Heart right ventricle (tissue), 16 donors: ENCODE measurements at regions of chr2 and their contacts with region 1.

Region 1: GRCh38 chr2:219402665-219403515 is 15.2 kb upstream of the DNPEP start:
- DNase-seq: peak in 1 of 2 donors; percentile 75
- ATAC-seq: peak in 6 of 8 donors; percentile 7 to 31 (median 19)
- H3K4me3 ChIP-seq: no peak overlapping the region
- H3K27ac ChIP-seq: peak overlapping the region in 8 of 10 donors; percentile 83 to 96 (median 92)
- H3K4me1 ChIP-seq: peaks cover 0 to 50% (median 19%) of the 10 kb centered on the region in 9 donors
- H3K27me3 ChIP-seq: no peaks in the 10 kb centered on the region
- CTCF ChIP-seq: peak; percentile 83 to 94 (median 90)

Region 2: GRCh38 chr2:219278655-219279516 is 124.0 kb before region 1 on chr2 and contains the start of gene DNAJB2:
- intact Hi-C with region 1: no loop called
- DNase-seq: peak; percentile 99
- ATAC-seq: peak; percentile 95 to 97 (median 97)
- H3K4me3 ChIP-seq: peak within 1 kb of the TSS; percentile 56 to 96 (median 75)
- H3K27ac ChIP-seq: peak within 1 kb of the TSS; percentile 91 to 100 (median 98)
- H3K4me1 ChIP-seq: peaks cover 11 to 62% (median 36%) of the 10 kb centered on the region in 9 donors
- H3K27me3 ChIP-seq: no peaks in the 10 kb centered on the region
- CTCF ChIP-seq: no peak
- total RNA-seq, gene DNAJB2: 55.6 to 87.6 (median 83.1) TPM

Region 3: DNA sequence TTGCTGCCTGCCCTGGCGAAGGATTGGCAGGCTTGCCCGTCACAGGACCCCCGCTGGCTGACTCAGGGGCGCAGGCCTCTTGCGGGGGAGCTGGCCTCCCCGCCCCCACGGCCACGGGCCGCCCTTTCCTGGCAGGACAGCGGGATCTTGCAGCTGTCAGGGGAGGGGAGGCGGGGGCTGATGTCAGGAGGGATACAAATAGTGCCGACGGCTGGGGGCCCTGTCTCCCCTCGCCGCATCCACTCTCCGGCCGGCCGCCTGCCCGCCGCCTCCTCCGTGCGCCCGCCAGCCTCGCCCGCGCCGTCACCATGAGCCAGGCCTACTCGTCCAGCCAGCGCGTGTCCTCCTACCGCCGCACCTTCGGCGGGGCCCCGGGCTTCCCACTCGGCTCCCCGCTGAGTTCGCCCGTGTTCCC is 15.3 kb after region 1 on chr2 and contains the start of gene DES:
- intact Hi-C with region 1: loop called in 2 of 10 experiments (anchors 1 to 2 kb)
- DNase-seq: peak; percentile 77 to 80
- ATAC-seq: peak; percentile 53 to 76 (median 66)
- H3K4me3 ChIP-seq: peak within 1 kb of the TSS; percentile 43 to 74 (median 59)
- H3K27ac ChIP-seq: peak within 1 kb of the TSS; percentile 82 to 98 (median 95)
- H3K4me1 ChIP-seq: peaks cover 2 to 28% (median 15%) of the 10 kb centered on the region in 9 donors
- H3K27me3 ChIP-seq: peaks cover 0 to 45% (median 24%) of the 10 kb centered on the region in 7 donors
- CTCF ChIP-seq: no peak
- total RNA-seq, gene DES: 12,560 to 18,019 (median 15,816) TPM

Region 4: DNA sequence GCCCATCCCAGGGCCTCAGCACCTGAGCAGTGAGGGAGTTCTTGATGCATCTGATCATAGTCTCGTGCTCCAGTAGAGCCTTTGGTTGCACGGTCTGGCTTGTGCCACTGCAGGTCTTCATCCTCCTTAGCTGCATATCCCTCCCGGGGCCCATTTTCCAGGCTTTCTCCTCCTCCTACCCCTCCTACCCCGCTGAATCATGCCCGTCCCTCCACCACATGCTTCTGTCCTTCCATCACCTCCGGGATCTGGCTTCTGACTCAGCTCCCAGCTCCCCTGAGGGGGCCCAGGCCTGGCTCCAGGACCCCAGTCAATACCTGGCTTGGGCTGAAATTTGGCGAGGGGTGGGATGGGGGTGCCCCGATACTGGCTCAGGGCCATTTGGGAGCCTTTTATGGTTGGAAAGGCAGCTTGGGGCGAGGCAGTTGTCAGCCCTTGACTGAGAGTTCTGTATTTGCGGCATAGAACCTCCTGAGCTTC is 50.0 kb after region 1 on chr2:
- intact Hi-C with region 1: loop called in 2 of 10 experiments (anchors 5 to 10 kb)
- DNase-seq: peak; percentile 52 to 64
- ATAC-seq: peak; percentile 64 to 88 (median 73)
- H3K4me3 ChIP-seq: no peak overlapping the region
- H3K27ac ChIP-seq: peak overlapping the region; percentile 70 to 97 (median 85)
- H3K4me1 ChIP-seq: peaks cover 14 to 52% (median 33%) of the 10 kb centered on the region in 9 donors
- H3K27me3 ChIP-seq: peaks cover 0 to 28% (median 15%) of the 10 kb centered on the region in 7 donors
- CTCF ChIP-seq: no peak

Region 5: DNA sequence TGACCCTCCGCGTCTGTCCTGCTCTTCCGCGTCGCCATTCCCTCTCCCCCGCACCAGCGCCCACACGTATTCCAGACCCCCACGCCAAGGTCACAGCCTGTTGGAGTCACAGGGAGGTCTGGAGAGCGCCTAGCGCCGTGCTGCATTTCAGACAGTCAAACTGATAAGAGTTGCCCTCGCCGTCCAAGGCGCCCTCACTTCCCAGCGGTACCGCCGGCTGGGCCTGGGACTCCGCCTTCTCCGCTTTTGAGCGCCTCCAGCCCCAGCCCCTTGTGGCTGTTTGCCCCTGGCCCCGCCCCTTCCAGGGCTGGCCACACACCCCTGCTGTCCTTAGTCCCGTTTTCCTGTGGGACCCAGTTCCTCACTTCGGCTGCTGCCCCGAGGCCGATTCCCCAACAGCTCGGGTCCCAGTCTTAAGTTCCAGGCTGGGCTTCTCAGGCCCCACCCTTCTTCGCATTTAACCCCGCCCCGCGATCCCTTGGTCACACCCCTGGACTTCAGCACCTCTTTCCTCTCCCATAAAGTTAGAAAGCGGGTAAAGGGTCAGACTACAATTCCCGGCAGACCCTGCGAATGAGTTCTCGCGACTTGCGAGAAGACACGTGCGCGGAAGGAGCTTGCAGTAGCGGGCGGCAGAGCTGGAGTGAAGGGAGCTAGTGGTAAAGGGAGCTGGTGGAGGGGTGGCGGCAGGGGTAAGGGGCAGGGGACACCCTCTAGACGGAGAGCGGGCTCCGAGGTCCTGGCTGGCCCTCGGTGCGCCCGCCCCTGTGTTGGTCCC is 95.6 kb after region 1 on chr2 and contains the start of gene GMPPA:
- intact Hi-C with region 1: loop called in 1 of 10 experiments (anchors 1 kb)
- DNase-seq: peak; percentile 94 to 97
- ATAC-seq: peak; percentile 87 to 94 (median 90)
- H3K4me3 ChIP-seq: peak within 1 kb of the TSS; percentile 52 to 88 (median 75)
- H3K27ac ChIP-seq: peak within 1 kb of the TSS; percentile 91 to 100 (median 96)
- H3K4me1 ChIP-seq: peaks cover 19 to 50% (median 37%) of the 10 kb centered on the region in 9 donors
- H3K27me3 ChIP-seq: peaks cover 0 to 43% (median 18%) of the 10 kb centered on the region in 7 donors
- CTCF ChIP-seq: peak in 3 of 9 donors; percentile 15 to 29 (median 25)
- total RNA-seq, gene GMPPA: 15.8 to 29.4 (median 21.0) TPM

Region 6: GRCh38 chr2:219627103-219628100 is 224.5 kb after region 1 on chr2 and contains the start of gene SLC4A3:
- intact Hi-C with region 1: loop called in 1 of 10 experiments (anchors 5 kb)
- DNase-seq: peak in 1 of 2 donors; percentile 55
- ATAC-seq: peak in 7 of 8 donors; percentile 4 to 34 (median 14)
- H3K4me3 ChIP-seq: peak within 1 kb of the TSS in 9 of 10 donors; percentile 50 to 60 (median 58)
- H3K27ac ChIP-seq: peak within 1 kb of the TSS; percentile 79 to 99 (median 94)
- H3K4me1 ChIP-seq: peaks cover 3 to 77% (median 22%) of the 10 kb centered on the region in 9 donors
- H3K27me3 ChIP-seq: peaks cover 0 to 38% (median 9%) of the 10 kb centered on the region in 7 donors
- CTCF ChIP-seq: peak in 4 of 9 donors; percentile 11 to 40 (median 22)
- total RNA-seq, gene SLC4A3: 339 to 671 (median 422) TPM